Vagina (tissue), 2 donors: ENCODE measurements at regions of chr7 and their contacts with region 1.

Region 1: DNA sequence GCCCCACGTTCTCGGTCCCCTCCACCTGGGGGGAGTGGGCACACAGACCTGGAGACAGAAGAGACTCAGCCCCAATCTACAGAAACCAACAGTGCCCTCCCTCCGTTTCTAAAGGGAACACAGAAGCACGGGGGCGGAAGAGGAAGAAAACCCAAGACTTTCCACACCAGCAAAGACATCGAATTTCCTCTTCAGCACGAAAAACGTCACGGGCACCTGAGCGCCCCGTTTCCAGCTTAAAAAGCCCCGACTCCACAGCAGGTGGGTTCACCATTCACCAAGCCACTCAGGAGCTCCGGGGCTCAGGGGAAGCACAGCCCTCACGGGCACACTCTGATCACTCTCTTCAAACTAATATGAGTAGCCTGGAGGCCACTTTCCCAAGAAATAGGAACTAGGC is 19.6 kb downstream of the NUDT1 start:
- DNase-seq: no peak
- H3K4me3 ChIP-seq: no peak overlapping the region
- H3K27ac ChIP-seq: no peak overlapping the region
- H3K4me1 ChIP-seq: no peaks in the 10 kb centered on the region
- H3K27me3 ChIP-seq: no peaks in the 10 kb centered on the region
- CTCF ChIP-seq: no peak
- POLR2A ChIP-seq: no peak

Region 2: GRCh38 chr7:664987-665735 is 1596.5 kb before region 1 on chr7:
- intact Hi-C with region 1: loop called (anchors 5 kb)
- DNase-seq: no peak
- H3K4me3 ChIP-seq: no peak overlapping the region
- H3K27ac ChIP-seq: peak overlapping the region; percentile 83
- H3K4me1 ChIP-seq: peaks cover 44% of the 10 kb centered on the region
- H3K27me3 ChIP-seq: no peaks in the 10 kb centered on the region
- CTCF ChIP-seq: no peak
- POLR2A ChIP-seq: no peak